GM12878 (cell line): ENCODE measurements at regions of chr1 and their contacts with region 1.

Region 1: GRCh38 chr1:231211005-231211857 is 29.8 kb upstream of the GNPAT start:
- DNase-seq: peak; percentile 86
- ATAC-seq: peak; percentile 93
- H3K4me3 ChIP-seq: peak overlapping the region; percentile 39; the same call in 1 of the 2 replicates
- H3K27ac ChIP-seq: peak overlapping the region; percentile 12; the same call in 1 of the 2 replicates
- H3K4me1 ChIP-seq: peaks cover 12% of the 10 kb centered on the region
- H3K27me3 ChIP-seq: no peaks in the 10 kb centered on the region
- CTCF ChIP-seq: peak; percentile 89 to 90 (median 90)
- EP300 ChIP-seq: no peak
- POLR2A ChIP-seq: 0 out of 2 replicates have a peak, but pooled peaks have one; percentile 39
- RAD21 ChIP-seq: peak; percentile 88

Region 2: DNA sequence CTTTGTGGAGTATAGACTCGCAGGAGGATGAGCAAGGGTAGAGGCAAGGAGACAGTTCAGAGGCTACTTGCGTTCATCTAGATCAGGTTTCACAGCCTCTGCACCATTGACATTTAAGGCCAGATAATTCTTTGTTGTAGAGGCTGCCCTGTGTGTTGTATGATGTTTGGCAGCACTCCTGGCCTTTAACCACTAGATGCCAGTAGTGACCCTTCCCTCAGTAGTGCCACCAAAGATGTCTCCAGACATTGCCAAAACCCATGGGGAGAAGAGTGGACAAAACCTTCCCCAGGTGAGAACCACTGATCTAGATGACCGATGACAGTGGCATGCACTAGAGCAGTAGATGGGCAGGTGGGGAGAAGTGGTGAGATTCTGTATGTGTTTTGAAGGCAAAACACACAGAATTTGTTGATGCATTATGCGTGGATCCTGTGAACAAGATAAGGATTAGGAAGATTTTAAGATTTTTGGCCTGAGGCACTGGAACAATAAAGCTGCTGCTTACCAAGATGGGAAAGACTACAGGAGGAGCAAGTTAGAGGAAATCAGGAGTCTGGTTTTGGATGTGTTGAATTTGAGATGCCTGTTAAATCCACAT is 578.9 kb before region 1 on chr1:
- CTCF ChIA-PET with region 1: no interaction called
- POLR2A ChIA-PET with region 1: no interaction called
- RAD21 ChIA-PET with region 1: no interaction called
- SMC1A ChIA-PET with region 1: no interaction called
- in situ Hi-C with region 1: loop called (anchors 10 kb)
- intact Hi-C with region 1: loop called (anchors 2 kb)
- DNase-seq: no peak
- ATAC-seq: peak; percentile 90
- H3K4me3 ChIP-seq: no peak overlapping the region
- H3K27ac ChIP-seq: no peak overlapping the region
- H3K4me1 ChIP-seq: no peaks in the 10 kb centered on the region; the same call in 1 of the 2 replicates
- H3K27me3 ChIP-seq: peaks cover 0 to 2% of the 10 kb centered on the region in 2 experiments; a peak in 1 of 4 replicates
- CTCF ChIP-seq: peak; percentile 48 to 69 (median 53); a peak in 5 of 6 replicates
- EP300 ChIP-seq: no peak
- POLR2A ChIP-seq: no peak
- RAD21 ChIP-seq: peak; percentile 53

Region 3: GRCh38 chr1:230917284-230918135 is 293.7 kb before region 1 on chr1:
- CTCF ChIA-PET with region 1: interaction called, 30 read pairs
- POLR2A ChIA-PET with region 1: no interaction called
- RAD21 ChIA-PET with region 1: no interaction called
- SMC1A ChIA-PET with region 1: interaction called, 4 read pairs
- in situ Hi-C with region 1: loop called (anchors 5 kb)
- intact Hi-C with region 1: loop called (anchors 1 kb)
- DNase-seq: peak; percentile 17
- ATAC-seq: peak; percentile 95
- H3K4me3 ChIP-seq: no peak overlapping the region
- H3K27ac ChIP-seq: no peak overlapping the region
- H3K4me1 ChIP-seq: no peaks in the 10 kb centered on the region
- H3K27me3 ChIP-seq: no peaks in the 10 kb centered on the region
- CTCF ChIP-seq: peak; percentile 66 to 80 (median 78)
- EP300 ChIP-seq: no peak
- POLR2A ChIP-seq: no peak
- RAD21 ChIP-seq: peak; percentile 79

Region 4: DNA sequence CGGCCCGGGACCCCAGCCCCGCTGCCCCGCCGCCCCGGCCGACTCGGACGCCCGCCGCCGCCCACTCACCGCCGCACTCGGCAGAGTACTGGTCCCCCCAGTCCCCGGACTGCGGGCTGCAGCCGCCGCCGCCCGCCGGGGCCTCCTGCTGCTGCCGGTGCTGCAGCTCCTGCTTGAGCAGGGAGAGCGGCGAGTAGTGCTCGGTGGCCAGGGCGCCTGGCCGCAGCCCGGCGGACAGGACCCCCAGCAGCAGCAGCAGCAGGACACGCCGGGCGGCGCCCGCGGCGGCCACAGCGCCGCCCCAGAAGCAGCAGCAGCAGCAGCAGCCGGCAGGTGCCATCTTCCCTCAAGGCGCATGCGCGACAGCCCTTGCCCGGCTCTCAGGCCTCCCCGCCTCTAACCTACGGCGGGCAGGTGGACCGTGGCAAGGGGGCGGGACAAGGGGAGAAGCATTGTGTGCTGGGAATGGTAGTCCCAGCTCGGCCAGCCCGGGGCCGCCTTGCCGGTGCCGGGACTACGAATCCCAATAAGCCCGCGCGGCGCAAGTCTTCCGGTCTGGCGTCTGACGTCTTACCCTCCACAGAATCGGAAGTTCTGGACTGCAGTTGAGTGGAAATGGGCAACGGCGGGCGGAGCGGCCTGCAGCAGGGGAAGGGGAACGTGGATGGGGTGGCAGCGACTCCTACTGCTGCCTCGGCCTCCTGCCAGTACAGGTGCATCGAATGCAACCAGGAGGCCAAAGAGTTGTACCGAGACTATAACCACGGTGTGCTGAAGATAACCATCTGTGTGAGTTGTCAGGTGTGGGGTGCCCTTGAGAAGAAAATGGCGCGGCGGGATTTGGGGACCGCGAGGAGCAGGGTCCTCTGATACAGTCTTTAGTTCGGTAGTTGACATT is 232.5 kb before region 1 on chr1 and contains the starts of genes ARV1 and TTC13:
- CTCF ChIA-PET with region 1: interaction called, 3 read pairs
- POLR2A ChIA-PET with region 1: no interaction called
- RAD21 ChIA-PET with region 1: no interaction called
- SMC1A ChIA-PET with region 1: no interaction called
- in situ Hi-C with region 1: no loop called
- intact Hi-C with region 1: loop called (anchors 5 kb)
- DNase-seq: peak; percentile 96
- ATAC-seq: peak; percentile 96
- H3K4me3 ChIP-seq: peak within 1 kb of the TSS; percentile 84
- H3K27ac ChIP-seq: peak within 1 kb of the TSS; percentile 71
- H3K4me1 ChIP-seq: peaks cover 13% of the 10 kb centered on the region; the same call in 1 of the 2 replicates
- H3K27me3 ChIP-seq: no peaks in the 10 kb centered on the region
- CTCF ChIP-seq: peak; percentile 56 to 80 (median 64); a peak in 4 of 6 replicates
- EP300 ChIP-seq: no peak
- POLR2A ChIP-seq: peak; percentile 97
- RAD21 ChIP-seq: peak; percentile 49; the same call in 1 of the 2 replicates
- polyA plus RNA-seq, gene ARV1: 23.7 to 24.0 TPM
- polyA plus RNA-seq, gene TTC13: 5.8 to 7.1 TPM

Region 5: DNA sequence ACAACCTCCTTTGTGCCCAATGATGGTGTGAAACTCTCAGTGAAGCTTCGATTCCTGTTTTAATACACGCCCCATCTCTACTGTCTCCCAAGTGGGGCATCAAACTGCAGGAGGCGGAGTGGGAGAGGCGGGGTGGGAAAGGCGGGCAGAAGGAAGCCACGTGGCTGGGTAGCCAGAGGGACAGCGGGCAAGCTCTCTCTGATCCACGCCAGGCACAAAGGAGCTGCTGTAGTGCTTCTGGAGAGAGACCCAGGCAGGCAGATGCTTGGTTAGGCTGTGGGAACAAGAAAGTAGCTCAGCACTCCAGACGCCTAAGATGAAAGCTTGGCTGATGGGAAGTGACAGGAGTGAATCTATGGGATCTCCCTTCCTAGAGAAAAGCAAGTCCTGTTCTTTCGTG is 23.7 kb before region 1 on chr1:
- CTCF ChIA-PET with region 1: no interaction called
- POLR2A ChIA-PET with region 1: no interaction called
- RAD21 ChIA-PET with region 1: no interaction called
- SMC1A ChIA-PET with region 1: no interaction called
- in situ Hi-C with region 1: no loop called
- intact Hi-C with region 1: loop called (anchors 2 kb)
- DNase-seq: no peak
- ATAC-seq: peak; percentile 38; the same call in 1 of the 3 replicates
- H3K4me3 ChIP-seq: no peak overlapping the region
- H3K27ac ChIP-seq: no peak overlapping the region
- H3K4me1 ChIP-seq: no peaks in the 10 kb centered on the region
- H3K27me3 ChIP-seq: peaks cover 2 to 5% of the 10 kb centered on the region in 2 experiments
- CTCF ChIP-seq: no peak
- EP300 ChIP-seq: no peak
- POLR2A ChIP-seq: no peak
- RAD21 ChIP-seq: no peak